Activated T-helper 1 cell treated with anti-CD3 and anti-CD28 coated beads, Interleukin-12 subunit alpha, Interleukin-12 subunit beta, Interleukin-2, Interleukin-4 antibody, amounts not matched to agents 30 ng/mL and 10 ng/mL and 1 ng/mL, durations not matched to agents 14 hours and 24 hours and 36 hours (primary cell): ENCODE measurements at regions of chrX and their contacts with region 1.

Region 1: DNA sequence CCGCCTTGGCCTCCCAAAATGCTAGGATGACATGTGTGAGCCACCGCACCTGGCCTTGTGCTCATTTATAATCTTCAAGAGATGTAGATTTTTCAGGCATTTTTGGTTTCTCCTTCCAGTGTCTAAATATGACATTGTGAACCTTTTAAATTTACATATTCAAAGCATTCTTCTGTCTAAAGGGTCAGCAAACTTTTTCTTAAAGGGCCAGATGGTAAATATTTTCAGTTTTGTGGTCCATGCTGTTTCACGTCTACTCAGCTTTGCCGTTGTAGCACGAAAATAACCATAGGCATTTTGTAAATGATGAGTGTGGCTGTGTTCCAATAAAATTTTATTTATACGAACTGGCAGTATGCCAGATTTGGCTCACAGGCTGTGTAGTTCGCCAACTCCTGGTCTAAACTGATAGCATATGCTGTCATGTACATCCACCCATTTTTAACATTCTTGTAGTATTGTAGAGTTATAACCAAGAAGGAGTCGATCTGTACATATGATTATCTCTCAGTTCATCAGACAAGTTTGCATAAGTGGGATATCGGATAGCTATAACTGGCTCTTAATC is 12.7 kb upstream of the GCNA start:
- DNase-seq: no peak
- H3K4me3 Mint-ChIP-seq: no peak overlapping the region
- H3K27ac Mint-ChIP-seq: no peak overlapping the region
- H3K4me1 Mint-ChIP-seq: peaks cover 6% of the 10 kb centered on the region
- H3K27me3 Mint-ChIP-seq: no peaks in the 10 kb centered on the region

Region 2: GRCh38 chrX:70998411-70999027 is 567.0 kb before region 1 on chrX:
- intact Hi-C with region 1: no loop called
- DNase-seq: no peak
- H3K4me3 Mint-ChIP-seq: no peak overlapping the region
- H3K27ac Mint-ChIP-seq: no peak overlapping the region
- H3K4me1 Mint-ChIP-seq: no peaks in the 10 kb centered on the region
- H3K27me3 Mint-ChIP-seq: peaks cover 23% of the 10 kb centered on the region

Region 3: GRCh38 chrX:71378732-71379131 is 186.8 kb before region 1 on chrX:
- intact Hi-C with region 1: loop called (anchors 10 kb)
- DNase-seq: no peak
- H3K4me3 Mint-ChIP-seq: no peak overlapping the region
- H3K27ac Mint-ChIP-seq: no peak overlapping the region
- H3K4me1 Mint-ChIP-seq: no peaks in the 10 kb centered on the region
- H3K27me3 Mint-ChIP-seq: no peaks in the 10 kb centered on the region